PC-9 (cell line): ENCODE measurements at regions of chr6 and their contacts with region 1.

Region 1: GRCh38 chr6:21022343-21023107 is 488.3 kb downstream of the CDKAL1 start:
- DNase-seq: peak; percentile 62 to 77
- H3K4me3 ChIP-seq: no peak overlapping the region
- H3K27ac ChIP-seq: peak overlapping the region; percentile 78
- H3K4me1 ChIP-seq: peaks cover 26% of the 10 kb centered on the region
- H3K27me3 ChIP-seq: no peaks in the 10 kb centered on the region
- CTCF ChIP-seq: no peak

Region 2: DNA sequence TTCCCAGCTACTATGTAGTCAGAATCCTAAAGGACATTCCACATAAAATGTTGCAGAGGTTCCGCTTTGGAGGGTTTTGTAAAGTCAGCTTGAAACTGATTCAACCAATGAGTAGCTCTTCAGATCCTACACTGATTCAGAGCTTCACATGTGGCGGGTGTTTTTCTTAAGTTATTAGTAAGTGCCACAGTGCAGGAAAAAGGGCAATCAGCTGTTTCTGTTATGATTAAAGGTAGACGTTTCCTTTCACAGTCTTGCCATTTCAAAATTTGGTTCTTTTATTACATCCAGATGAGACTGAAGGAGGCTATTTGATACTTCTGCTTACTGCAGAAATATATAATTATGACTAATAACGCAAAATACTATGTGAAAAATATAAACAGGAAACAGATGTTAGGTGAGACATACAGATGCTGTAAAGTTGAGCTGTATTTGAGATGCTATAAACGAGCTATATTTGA is 44.3 kb before region 1 on chr6:
- CTCF ChIA-PET with region 1: no interaction called
- POLR2A ChIA-PET with region 1: no interaction called
- intact Hi-C with region 1: no loop called
- DNase-seq: no peak
- H3K4me3 ChIP-seq: no peak overlapping the region
- H3K27ac ChIP-seq: no peak overlapping the region
- H3K4me1 ChIP-seq: no peaks in the 10 kb centered on the region
- H3K27me3 ChIP-seq: no peaks in the 10 kb centered on the region
- CTCF ChIP-seq: no peak

Region 3: GRCh38 chr6:21277601-21278374 is 255.3 kb after region 1 on chr6:
- CTCF ChIA-PET with region 1: no interaction called
- POLR2A ChIA-PET with region 1: no interaction called
- intact Hi-C with region 1: loop called (anchors 5 kb)
- DNase-seq: peak; percentile 62 to 74
- H3K4me3 ChIP-seq: no peak overlapping the region
- H3K27ac ChIP-seq: no peak overlapping the region
- H3K4me1 ChIP-seq: 0 out of 2 replicates have a peak, but pooled peaks cover 3% of the 10 kb centered on the region
- H3K27me3 ChIP-seq: no peaks in the 10 kb centered on the region
- CTCF ChIP-seq: no peak

Region 4: GRCh38 chr6:21381335-21382217 is 359.1 kb after region 1 on chr6:
- CTCF ChIA-PET with region 1: no interaction called
- POLR2A ChIA-PET with region 1: no interaction called
- intact Hi-C with region 1: loop called (anchors 1 kb)
- DNase-seq: peak; percentile 59 to 91
- H3K4me3 ChIP-seq: no peak overlapping the region
- H3K27ac ChIP-seq: peak overlapping the region; percentile 93
- H3K4me1 ChIP-seq: peaks cover 59% of the 10 kb centered on the region
- H3K27me3 ChIP-seq: no peaks in the 10 kb centered on the region
- CTCF ChIP-seq: no peak